ENCODE measurements at regions of chr10 and their contacts with region 1.

Region 1: DNA sequence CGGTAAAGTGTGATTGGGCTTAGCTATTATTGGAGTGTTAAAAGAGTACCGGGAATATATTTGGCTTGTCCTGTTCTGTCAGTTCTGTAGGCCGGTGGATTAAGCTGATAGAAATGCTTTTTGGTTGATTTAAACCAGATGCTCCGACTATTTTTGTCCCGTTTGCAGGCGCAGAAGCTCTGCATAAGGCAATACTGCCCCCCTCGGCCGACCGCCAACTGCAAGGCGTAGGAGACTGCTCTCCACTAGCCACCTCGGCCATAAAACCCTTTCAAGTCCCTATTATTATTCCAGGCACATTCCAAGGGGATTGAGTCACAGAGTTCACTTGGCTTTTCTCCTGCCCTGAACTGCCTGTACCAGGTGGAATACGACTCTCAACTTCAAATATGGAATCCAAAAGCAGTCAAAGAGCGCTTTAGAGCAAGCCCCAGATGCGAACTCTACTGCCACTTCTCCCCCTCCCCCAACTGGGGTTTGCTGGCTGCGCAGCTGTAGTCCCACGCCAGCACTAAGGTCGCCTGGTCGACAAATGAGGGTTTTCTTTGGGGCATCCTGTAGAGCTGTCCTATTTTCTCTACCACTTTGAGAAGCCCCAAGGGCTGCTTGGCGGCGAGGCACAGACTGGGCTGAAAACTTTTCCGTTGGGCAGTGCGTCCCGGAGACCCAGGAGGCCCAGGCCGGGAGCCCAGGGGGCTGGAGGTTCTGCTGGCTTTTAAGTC is 108.3 kb downstream of the REEP3 start:
- DNase-seq: peak; percentile 97 to 98
- H3K4me3 ChIP-seq: peak overlapping the region; percentile 60 to 78
- H3K27ac ChIP-seq: peak overlapping the region; percentile 94 to 98
- H3K4me1 ChIP-seq: peaks cover 0 to 24% (median 16%) of the 10 kb centered on the region in 4 donors
- H3K27me3 ChIP-seq: no peaks in the 10 kb centered on the region
- CTCF ChIP-seq: peak; percentile 66 to 77

Region 2: DNA sequence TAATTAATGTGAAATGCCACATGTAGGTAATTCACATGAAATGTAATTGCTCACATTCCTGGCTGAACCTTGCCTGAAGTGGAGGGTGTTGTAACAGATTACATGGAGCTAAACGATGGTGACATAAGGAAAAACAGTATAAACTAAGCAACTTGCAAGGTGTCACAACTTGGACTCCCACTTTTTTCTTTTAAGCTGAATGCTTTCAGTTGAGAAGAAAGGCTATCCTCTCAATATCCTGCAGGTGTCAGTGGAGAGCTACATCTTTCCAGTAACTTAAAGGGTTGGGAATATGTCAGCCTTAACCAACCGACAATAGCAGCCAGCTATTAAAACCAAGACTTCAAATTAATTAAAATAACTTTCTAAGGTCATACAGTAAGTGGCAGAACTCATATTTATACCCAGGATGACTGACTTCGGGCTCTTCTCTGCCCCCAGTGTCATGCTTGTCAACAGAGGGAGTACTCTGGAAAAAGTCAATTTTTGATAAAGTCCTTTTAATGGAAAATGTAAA is 462.7 kb before region 1 on chr10:
- intact Hi-C with region 1: loop called (anchors 5 kb)
- DNase-seq: no peak
- H3K4me3 ChIP-seq: no peak overlapping the region
- H3K27ac ChIP-seq: peak overlapping the region in 1 of 2 donors; percentile 8
- H3K4me1 ChIP-seq: peaks cover 0 to 15% (median 3%) of the 10 kb centered on the region in 4 donors
- H3K27me3 ChIP-seq: no peaks in the 10 kb centered on the region
- CTCF ChIP-seq: peak; percentile 69 to 87

Region 3: GRCh38 chr10:63217120-63217605 is 412.4 kb before region 1 on chr10:
- intact Hi-C with region 1: loop called (anchors 5 kb)
- DNase-seq: no peak
- H3K4me3 ChIP-seq: no peak overlapping the region
- H3K27ac ChIP-seq: no peak overlapping the region
- H3K4me1 ChIP-seq: peaks cover 0 to 16% (median 0%) of the 10 kb centered on the region in 4 donors
- H3K27me3 ChIP-seq: no peaks in the 10 kb centered on the region
- CTCF ChIP-seq: peak; percentile 67 to 77

Region 4: DNA sequence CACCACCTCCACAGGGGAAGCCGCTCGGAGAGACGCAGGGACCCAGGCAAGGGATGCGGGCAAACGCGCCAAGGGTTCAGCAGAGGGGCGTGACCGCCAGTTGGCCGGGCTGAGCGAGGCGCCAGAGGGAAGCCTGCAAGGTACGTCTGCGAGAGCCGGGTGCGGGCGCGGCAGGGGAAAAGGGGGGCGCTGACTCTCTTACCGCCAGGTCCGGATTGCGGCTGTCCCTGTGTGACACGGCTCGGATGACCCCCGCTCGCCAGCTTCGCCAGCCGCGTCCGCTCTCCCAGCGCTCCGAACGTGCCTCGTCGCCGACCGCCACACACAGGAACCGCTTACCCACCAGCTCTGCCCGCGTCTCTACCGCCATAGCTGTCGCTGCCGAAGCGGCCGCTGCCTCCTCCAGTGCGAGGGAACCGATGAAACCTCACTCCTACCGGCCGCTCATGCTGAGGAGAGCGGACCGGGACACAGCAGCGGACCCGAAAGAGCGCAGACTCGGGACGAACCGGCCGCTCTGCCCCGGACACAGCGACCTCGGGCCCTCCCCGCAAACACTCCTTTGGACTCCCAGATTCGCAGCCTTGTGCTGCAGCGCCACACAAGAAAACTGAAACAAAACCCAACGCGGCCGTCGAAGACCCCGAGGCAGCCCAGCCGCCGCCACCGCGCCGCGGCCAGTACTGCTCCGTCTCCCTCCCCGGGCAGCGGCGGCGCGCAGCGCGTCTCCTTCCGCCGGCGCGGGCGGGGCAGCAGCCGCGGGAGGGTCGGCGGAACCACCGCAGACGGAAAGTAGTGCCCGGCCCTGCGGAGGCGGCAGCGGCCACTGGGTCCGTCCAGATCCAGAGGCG is 164.0 kb before region 1 on chr10 and contains the start of gene JMJD1C:
- intact Hi-C with region 1: loop called (anchors 10 kb)
- DNase-seq: peak; percentile 59 to 91
- H3K4me3 ChIP-seq: peak within 1 kb of the TSS; percentile 62 to 84
- H3K27ac ChIP-seq: peak within 1 kb of the TSS; percentile 89 to 95
- H3K4me1 ChIP-seq: peaks cover 0 to 25% (median 1%) of the 10 kb centered on the region in 4 donors
- H3K27me3 ChIP-seq: no peaks in the 10 kb centered on the region
- CTCF ChIP-seq: peak in 1 of 2 experiments; percentile 8

Region 5: DNA sequence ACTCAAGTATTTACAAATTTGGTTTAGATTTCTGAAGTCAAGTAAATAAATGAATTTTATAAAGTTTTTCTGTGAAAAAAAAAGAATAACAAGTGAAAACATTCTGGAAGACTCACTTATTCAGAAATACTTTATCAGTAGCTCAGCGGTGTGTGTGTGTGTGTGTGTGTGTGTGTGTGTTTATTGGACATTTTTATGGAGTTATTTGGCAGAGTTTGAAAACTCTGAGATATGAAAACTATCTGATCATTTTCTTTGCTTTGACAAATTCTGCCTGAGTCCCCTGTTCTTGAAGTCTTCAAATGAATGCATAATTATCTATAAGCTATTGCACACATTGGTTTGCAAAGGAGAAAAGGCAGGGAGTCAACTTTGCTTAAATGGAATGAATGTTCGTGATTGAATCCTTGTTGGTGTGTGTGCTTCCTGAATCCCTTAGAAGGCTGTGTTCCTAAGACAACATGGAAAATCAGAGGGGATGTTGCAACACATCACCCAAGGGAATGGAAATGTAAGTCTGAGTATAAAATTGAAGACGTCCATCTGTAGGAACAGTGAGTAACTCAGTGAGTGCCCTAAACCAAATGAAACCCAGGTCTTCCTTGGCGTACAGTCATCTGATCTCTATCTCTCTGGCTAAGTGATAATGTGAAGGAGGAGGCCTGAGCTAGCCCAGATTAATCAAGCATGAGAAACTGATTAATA is 52.6 kb after region 1 on chr10:
- intact Hi-C with region 1: no loop called
- DNase-seq: peak in 1 of 2 donors; percentile 62
- H3K4me3 ChIP-seq: no peak overlapping the region
- H3K27ac ChIP-seq: peak overlapping the region; percentile 59 to 66
- H3K4me1 ChIP-seq: peaks cover 0 to 16% (median 0%) of the 10 kb centered on the region in 4 donors
- H3K27me3 ChIP-seq: no peaks in the 10 kb centered on the region
- CTCF ChIP-seq: no peak

Region 6: DNA sequence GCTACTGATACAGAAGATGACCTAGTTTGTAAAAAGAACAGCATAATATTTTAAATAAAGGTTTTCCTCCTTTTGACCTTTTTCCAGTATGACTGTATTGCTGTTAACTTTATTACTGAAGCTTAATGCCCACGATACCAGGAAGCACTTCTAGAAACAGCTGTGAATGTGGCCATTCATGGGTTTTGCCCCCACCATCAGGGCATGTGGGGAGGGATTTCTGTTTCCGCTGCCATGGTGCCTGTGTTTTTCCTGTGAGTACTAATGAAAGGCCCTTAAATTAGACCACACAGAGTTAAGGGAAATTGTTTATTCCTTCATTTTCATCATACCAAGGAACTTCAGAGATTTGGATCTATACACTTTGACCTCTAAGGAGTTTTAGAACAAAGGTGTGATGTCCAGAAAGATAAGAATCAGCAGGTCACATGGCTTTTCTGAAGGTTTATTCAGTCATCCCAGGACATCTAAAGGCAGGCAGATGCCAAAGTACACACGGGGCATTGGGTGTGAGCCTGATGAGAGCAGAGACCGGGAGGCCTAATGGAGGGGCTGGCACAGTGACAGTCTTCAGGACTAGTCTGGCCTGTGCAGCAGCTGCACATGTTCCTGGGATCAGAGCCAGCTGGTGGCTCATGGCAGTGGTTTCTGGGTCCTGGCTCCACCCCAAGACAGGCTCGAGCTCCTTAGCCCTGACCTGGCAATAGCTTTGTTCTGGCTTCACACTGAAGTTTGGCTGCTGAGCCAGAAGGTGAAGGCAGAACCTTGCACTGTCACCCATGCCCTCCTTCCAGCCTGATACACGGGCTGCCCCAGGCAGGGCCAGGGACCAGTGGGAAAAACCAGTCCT is 82.6 kb after region 1 on chr10:
- intact Hi-C with region 1: loop called (anchors 5 kb)
- DNase-seq: peak; percentile 94 to 98
- H3K4me3 ChIP-seq: no peak overlapping the region
- H3K27ac ChIP-seq: peak overlapping the region; percentile 68 to 73
- H3K4me1 ChIP-seq: peaks cover 0 to 54% (median 44%) of the 10 kb centered on the region in 4 donors
- H3K27me3 ChIP-seq: no peaks in the 10 kb centered on the region
- CTCF ChIP-seq: no peak